Gastrocnemius medialis (tissue), 4 donors: ENCODE measurements at regions of chr7 and their contacts with region 1.

Region 1: DNA sequence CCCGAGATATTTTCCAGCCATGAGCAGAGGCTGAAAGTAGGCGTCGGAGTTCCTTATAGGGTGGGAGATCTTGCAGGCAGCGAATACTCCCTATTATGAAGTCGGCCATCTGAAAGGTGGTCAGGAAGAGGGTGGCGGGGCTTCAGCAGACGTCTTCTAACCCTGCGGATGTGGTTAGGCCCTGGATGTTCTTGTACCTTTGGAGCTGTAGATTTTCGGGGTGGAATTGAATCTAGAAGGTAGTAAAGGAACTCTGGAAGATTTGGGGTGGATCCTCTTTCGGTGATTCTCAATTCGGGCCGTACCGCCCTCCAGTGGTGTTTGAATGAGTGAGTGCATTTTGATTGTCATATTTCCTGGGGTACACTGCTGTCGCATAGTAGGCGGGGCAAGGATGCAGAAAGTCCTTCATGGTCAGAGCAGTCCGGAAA is 635 bp downstream of the NUP205 start:
- DNase-seq: peak; percentile 6 to 20
- ATAC-seq: peak; percentile 32 to 51
- H3K4me3 ChIP-seq: peak overlapping the region; percentile 75 to 97 (median 86)
- H3K27ac ChIP-seq: peak overlapping the region; percentile 85 to 96 (median 94)
- H3K4me1 ChIP-seq: peaks cover 6 to 14% of the 10 kb centered on the region in 2 donors
- H3K27me3 ChIP-seq: no peaks in the 10 kb centered on the region
- CTCF ChIP-seq: peak in 3 of 5 experiments; percentile 38 to 48 (median 44)
- POLR2A ChIP-seq: no peak

Region 2: DNA sequence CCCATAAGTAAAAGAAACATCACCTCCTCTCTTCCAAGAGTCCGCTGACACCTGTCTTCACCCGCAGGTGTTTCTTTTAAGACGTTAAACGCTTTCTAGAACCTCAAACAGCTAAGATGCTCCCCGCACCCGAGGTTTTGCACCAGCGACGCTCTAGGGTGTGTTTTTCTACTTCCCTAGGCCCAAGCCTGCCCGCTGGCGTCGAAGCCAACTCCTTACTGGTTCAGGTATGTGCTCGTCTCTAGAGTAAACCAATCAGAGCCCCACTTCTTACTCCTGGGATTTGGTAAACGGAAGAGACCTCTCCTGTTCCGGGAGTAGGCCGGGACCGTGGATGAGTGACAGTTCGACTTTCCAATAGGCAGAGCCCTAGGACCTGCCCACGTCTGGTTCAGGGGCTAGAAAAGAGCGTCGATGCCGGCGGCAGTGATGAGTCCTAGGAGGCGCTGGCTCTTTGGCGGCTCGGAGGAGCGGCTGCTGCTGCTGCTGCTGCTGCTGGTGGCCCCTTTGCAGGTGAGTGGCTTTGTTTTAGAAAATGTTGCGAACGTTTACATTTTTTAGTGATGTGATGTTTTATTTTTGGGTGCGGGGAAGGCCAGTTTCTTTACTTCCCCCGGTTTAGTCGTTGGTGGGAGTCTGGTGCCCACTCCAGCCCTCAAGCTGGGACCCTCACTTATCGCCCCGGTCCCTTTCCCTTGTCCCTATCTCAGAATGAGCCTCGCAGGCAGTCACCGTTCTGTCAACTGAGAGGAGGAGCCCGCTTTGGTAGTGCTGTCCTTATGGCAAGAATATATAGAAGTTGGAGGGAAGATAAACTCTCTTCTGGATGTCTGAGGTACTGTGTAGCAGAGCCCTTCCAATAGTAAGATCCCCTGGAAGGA is 911.7 kb before region 1 on chr7 and contains the start of gene BPGM:
- in situ Hi-C with region 1: no loop called
- intact Hi-C with region 1: loop called (anchors 10 kb)
- DNase-seq: peak; percentile 98 to 99
- ATAC-seq: peak; percentile 100
- H3K4me3 ChIP-seq: peak within 1 kb of the TSS; percentile 61 to 85 (median 76)
- H3K27ac ChIP-seq: peak within 1 kb of the TSS; percentile 81 to 89 (median 85)
- H3K4me1 ChIP-seq: peaks cover 17 to 20% of the 10 kb centered on the region in 2 donors
- H3K27me3 ChIP-seq: no peaks in the 10 kb centered on the region
- CTCF ChIP-seq: peak in 1 of 5 experiments; percentile 10
- POLR2A ChIP-seq: peak; percentile 89 to 98
- total RNA-seq, gene BPGM: 11.3 to 24.5 (median 13.6) TPM

Region 3: GRCh38 chr7:135281363-135281949 is 276.9 kb before region 1 on chr7:
- in situ Hi-C with region 1: loop called (anchors 5 to 10 kb)
- intact Hi-C with region 1: loop called (anchors 1 kb)
- DNase-seq: peak; percentile 68 to 73
- ATAC-seq: peak; percentile 86 to 96
- H3K4me3 ChIP-seq: no peak overlapping the region
- H3K27ac ChIP-seq: no peak overlapping the region
- H3K4me1 ChIP-seq: peaks cover 19 to 33% of the 10 kb centered on the region in 2 donors
- H3K27me3 ChIP-seq: no peaks in the 10 kb centered on the region
- CTCF ChIP-seq: peak; percentile 88 to 98 (median 89)
- POLR2A ChIP-seq: no peak

Region 4: GRCh38 chr7:135414850-135415439 is 143.4 kb before region 1 on chr7:
- in situ Hi-C with region 1: no loop called
- intact Hi-C with region 1: loop called (anchors 10 kb)
- DNase-seq: no peak
- ATAC-seq: no peak
- H3K4me3 ChIP-seq: no peak overlapping the region
- H3K27ac ChIP-seq: no peak overlapping the region
- H3K4me1 ChIP-seq: peaks cover 0 to 1% of the 10 kb centered on the region in 2 donors
- H3K27me3 ChIP-seq: no peaks in the 10 kb centered on the region
- CTCF ChIP-seq: peak in 3 of 5 experiments; percentile 11 to 45 (median 36)
- POLR2A ChIP-seq: no peak

Region 5: GRCh38 chr7:135645296-135645904 is 87.0 kb after region 1 on chr7:
- in situ Hi-C with region 1: no loop called
- intact Hi-C with region 1: no loop called
- DNase-seq: no peak
- ATAC-seq: peak in 1 of 2 donors; percentile 53
- H3K4me3 ChIP-seq: no peak overlapping the region
- H3K27ac ChIP-seq: no peak overlapping the region
- H3K4me1 ChIP-seq: no peaks in the 10 kb centered on the region
- H3K27me3 ChIP-seq: no peaks in the 10 kb centered on the region
- CTCF ChIP-seq: peak in 4 of 5 experiments; percentile 39 to 63 (median 50)
- POLR2A ChIP-seq: no peak